ENCODE measurements at regions of chr15 and their contacts with region 1.

Region 1: DNA sequence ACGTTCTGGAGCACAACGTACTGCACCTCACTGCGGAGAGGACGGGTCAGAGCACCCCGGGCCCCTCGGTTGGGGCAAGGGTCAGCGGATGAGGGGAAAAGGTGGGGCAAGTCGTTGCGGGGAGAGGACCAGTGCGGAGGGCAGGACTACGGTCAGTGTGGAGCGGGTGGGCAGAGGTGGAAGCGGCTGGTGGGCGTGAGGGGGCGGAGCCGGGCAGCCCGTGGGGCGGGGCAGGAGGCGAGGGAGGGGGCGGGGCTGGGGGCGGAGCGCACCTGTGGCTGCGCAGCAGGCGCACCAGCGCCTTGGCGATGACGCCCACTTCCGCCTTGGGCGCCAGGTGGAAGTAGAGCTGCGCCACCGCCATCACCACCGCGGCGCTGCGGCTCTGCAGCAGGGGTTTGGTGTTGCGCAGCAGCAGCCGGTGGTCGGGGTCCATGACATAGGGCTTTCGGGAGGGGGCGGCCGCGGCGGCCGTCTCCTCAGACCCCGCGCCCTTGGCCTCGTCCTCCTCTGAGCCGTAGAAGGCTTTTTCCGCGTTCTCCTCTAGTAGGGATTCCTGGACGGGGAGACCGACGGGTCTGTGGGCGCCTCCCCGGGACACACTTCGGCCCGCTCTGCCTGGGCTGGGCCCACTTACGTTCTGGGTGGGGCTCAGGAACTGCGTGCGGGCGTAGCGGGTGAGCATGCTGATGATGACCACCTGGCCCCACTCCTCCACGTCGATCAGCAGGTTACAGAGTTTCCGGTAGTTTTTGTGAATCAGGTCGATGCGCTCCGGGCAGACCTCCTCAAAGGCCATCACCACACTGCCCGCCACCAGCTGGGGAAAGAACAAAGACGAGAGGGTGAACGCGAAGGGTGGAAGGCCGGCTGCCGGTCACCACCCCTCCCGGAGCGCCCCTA is 29.2 kb downstream of the AP3B2 start:
- DNase-seq: peak; percentile 58
- H3K4me3 Mint-ChIP-seq: peak overlapping the region; percentile 77
- H3K27ac Mint-ChIP-seq: peak overlapping the region; percentile 80
- H3K4me1 Mint-ChIP-seq: no peaks in the 10 kb centered on the region
- H3K27me3 Mint-ChIP-seq: peaks cover 14% of the 10 kb centered on the region
- CTCF ChIP-seq: peak; percentile 18

Region 2: GRCh38 chr15:81981908-81982307 is 698.5 kb before region 1 on chr15:
- CTCF ChIA-PET with region 1: no interaction called
- POLR2A ChIA-PET with region 1: no interaction called
- intact Hi-C with region 1: no loop called
- DNase-seq: no peak
- H3K4me3 Mint-ChIP-seq: no peak overlapping the region
- H3K27ac Mint-ChIP-seq: no peak overlapping the region
- H3K4me1 Mint-ChIP-seq: no peaks in the 10 kb centered on the region
- H3K27me3 Mint-ChIP-seq: no peaks in the 10 kb centered on the region
- CTCF ChIP-seq: no peak

Region 3: GRCh38 chr15:82587805-82588204 is 92.6 kb before region 1 on chr15:
- CTCF ChIA-PET with region 1: no interaction called
- POLR2A ChIA-PET with region 1: no interaction called
- intact Hi-C with region 1: no loop called
- DNase-seq: no peak
- H3K4me3 Mint-ChIP-seq: no peak overlapping the region
- H3K27ac Mint-ChIP-seq: no peak overlapping the region
- H3K4me1 Mint-ChIP-seq: no peaks in the 10 kb centered on the region
- H3K27me3 Mint-ChIP-seq: peaks cover 57% of the 10 kb centered on the region
- CTCF ChIP-seq: no peak

Region 4: GRCh38 chr15:82663186-82663600 is 17.3 kb before region 1 on chr15:
- CTCF ChIA-PET with region 1: no interaction called
- POLR2A ChIA-PET with region 1: no interaction called
- intact Hi-C with region 1: no loop called
- DNase-seq: peak; percentile 70
- H3K4me3 Mint-ChIP-seq: no peak overlapping the region
- H3K27ac Mint-ChIP-seq: no peak overlapping the region
- H3K4me1 Mint-ChIP-seq: no peaks in the 10 kb centered on the region
- H3K27me3 Mint-ChIP-seq: peaks cover 12% of the 10 kb centered on the region
- CTCF ChIP-seq: no peak

Region 5: GRCh38 chr15:82832601-82833361 is 152.3 kb after region 1 on chr15:
- CTCF ChIA-PET with region 1: no interaction called
- POLR2A ChIA-PET with region 1: interaction called, 3 read pairs
- intact Hi-C with region 1: loop called (anchors 1 kb)
- DNase-seq: peak; percentile 76
- H3K4me3 Mint-ChIP-seq: no peak overlapping the region
- H3K27ac Mint-ChIP-seq: peak overlapping the region; percentile 75
- H3K4me1 Mint-ChIP-seq: peaks cover 16% of the 10 kb centered on the region
- H3K27me3 Mint-ChIP-seq: no peaks in the 10 kb centered on the region
- CTCF ChIP-seq: no peak

Measured in MCF 10A (cell line).